Right ventricle myocardium inferior (tissue), 1 donor: ENCODE measurements at regions of chr16 and their contacts with region 1.

Region 1: GRCh38 chr16:72818236-72818845 is 229.6 kb downstream of the ZFHX3 start:
- DNase-seq: no peak
- ATAC-seq: no peak

Region 2: GRCh38 chr16:73047518-73048291 is 229.4 kb after region 1 on chr16 and contains the start of gene ZFHX3:
- intact Hi-C with region 1: no loop called
- DNase-seq: no peak
- ATAC-seq: peak; percentile 67
- total RNA-seq, gene ZFHX3: 8.4 TPM

Region 3: GRCh38 chr16:73232555-73233328 is 414.4 kb after region 1 on chr16:
- intact Hi-C with region 1: no loop called
- DNase-seq: no peak
- ATAC-seq: peak; percentile 51

Region 4: GRCh38 chr16:73311916-73312315 is 493.6 kb after region 1 on chr16:
- intact Hi-C with region 1: loop called (anchors 5 kb)
- DNase-seq: no peak
- ATAC-seq: no peak